WTC11 (cell line): ENCODE measurements at regions of chr5 and their contacts with region 1.

Region 1: DNA sequence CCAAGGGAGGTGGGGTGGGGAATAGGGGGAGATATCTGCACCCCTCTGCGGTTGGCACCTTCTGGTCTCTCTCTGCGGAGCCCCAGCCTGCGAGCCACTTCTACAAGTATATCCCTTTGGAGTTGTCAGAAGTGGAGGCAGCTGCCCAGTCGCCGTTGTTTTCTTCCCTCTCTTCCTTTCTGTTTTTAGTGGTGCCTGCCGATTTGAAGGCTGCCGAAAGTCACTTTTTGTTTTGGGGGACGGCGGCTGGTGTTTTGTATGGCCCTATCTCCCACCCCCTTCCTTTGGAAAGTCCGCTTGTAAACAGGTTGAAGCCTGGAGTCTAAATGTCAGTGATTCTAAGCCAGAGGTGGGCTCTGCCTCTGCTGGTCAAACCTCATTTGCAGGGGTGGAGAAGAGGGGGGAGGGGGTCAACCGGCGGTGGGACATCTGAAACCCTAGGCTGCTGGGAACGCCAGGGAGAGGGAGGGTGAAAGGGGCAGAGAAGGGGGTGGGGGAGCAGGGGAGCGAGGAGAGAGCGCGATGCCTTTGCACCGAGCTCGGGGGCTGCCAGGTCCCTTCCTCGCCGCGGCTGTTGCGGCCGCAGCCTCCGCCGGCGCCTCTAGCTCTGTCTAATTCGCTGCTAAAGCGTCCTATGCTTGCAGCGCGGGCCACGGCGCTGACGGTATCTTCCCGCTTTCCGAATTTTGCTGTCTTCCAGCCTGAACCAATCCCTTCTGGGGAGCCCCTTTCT is at the start of gene FGF10:
- DNase-seq: peak; percentile 72
- ATAC-seq: peak; percentile 83
- H3K4me3 Mint-ChIP-seq: peak within 1 kb of the TSS; percentile 91
- H3K27ac Mint-ChIP-seq: no peak within 1 kb of the TSS
- H3K4me1 Mint-ChIP-seq: peaks cover 41% of the 10 kb centered on the region
- H3K27me3 Mint-ChIP-seq: peaks cover 54% of the 10 kb centered on the region
- CTCF ChIP-seq: no peak
- total RNA-seq, gene FGF10: 0.32 to 0.44 TPM (median 0.37 TPM) in 3 replicates

Region 2: DNA sequence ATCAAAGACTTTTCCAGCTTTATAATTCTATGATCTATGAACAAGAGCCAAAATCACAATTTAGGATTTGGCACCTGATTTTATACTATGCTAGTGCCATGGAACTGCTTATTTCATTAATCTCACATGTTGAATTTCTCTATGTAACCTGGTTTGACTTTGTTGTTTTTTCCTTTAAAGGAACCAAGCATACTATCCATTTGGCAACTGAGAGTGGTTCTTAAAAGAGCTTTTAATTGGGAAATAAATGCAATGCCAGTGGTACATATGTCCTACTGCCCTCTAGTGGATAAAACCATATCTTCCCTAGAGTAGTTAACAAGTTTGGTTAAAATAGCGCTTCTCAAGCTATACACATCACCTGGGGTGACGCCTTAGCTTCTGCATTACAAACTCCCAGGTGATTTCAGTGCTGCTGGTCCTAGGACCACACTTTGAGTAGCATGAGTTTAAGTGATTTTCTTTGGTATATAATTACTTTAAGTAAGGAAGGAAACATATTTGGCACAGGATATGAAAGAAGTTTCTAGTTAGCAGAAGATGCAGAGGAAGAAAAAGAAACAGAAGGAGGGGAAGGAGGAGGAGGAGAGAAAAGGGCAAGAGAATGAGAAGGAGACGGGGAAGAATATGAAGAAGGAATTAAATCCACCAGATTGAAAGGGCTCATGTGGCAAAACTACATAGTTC is 56.8 kb before region 1 on chr5:
- CTCF ChIA-PET with region 1: interaction called, 13 read pairs
- POLR2A ChIA-PET with region 1: no interaction called
- DNase-seq: peak; percentile 10
- ATAC-seq: peak; percentile 91
- H3K4me3 Mint-ChIP-seq: no peak overlapping the region
- H3K27ac Mint-ChIP-seq: no peak overlapping the region
- H3K4me1 Mint-ChIP-seq: peaks cover 17% of the 10 kb centered on the region
- H3K27me3 Mint-ChIP-seq: no peaks in the 10 kb centered on the region
- CTCF ChIP-seq: peak; percentile 50

Region 3: GRCh38 chr5:44377057-44377456 is 12.2 kb before region 1 on chr5:
- CTCF ChIA-PET with region 1: no interaction called
- POLR2A ChIA-PET with region 1: no interaction called
- DNase-seq: no peak
- ATAC-seq: no peak
- H3K4me3 Mint-ChIP-seq: no peak overlapping the region
- H3K27ac Mint-ChIP-seq: no peak overlapping the region
- H3K4me1 Mint-ChIP-seq: no peaks in the 10 kb centered on the region
- H3K27me3 Mint-ChIP-seq: no peaks in the 10 kb centered on the region
- CTCF ChIP-seq: no peak